Activated CD4-positive, alpha-beta T cell treated with anti-CD3 and anti-CD28 coated beads for 36 hours (primary cell): ENCODE measurements at regions of chr2 and their contacts with region 1.

Region 1: GRCh38 chr2:132267105-132267497 is 105.3 kb upstream of the ANKRD30BL start:
- DNase-seq: no peak
- ATAC-seq: no peak
- H3K4me3 Mint-ChIP-seq: no peak overlapping the region
- H3K27ac Mint-ChIP-seq: no peak overlapping the region
- H3K4me1 Mint-ChIP-seq: no peaks in the 10 kb centered on the region
- H3K27me3 Mint-ChIP-seq: no peaks in the 10 kb centered on the region

Region 2: GRCh38 chr2:133171393-133172004 is 904.4 kb after region 1 on chr2:
- CTCF ChIA-PET with region 1: no interaction called
- POLR2A ChIA-PET with region 1: no interaction called
- intact Hi-C with region 1: loop called in 1 of 2 experiments (anchors 1 kb)
- DNase-seq: no peak
- ATAC-seq: no peak
- H3K4me3 Mint-ChIP-seq: no peak overlapping the region
- H3K27ac Mint-ChIP-seq: no peak overlapping the region
- H3K4me1 Mint-ChIP-seq: no peaks in the 10 kb centered on the region
- H3K27me3 Mint-ChIP-seq: peaks cover 6% of the 10 kb centered on the region

Region 3: DNA sequence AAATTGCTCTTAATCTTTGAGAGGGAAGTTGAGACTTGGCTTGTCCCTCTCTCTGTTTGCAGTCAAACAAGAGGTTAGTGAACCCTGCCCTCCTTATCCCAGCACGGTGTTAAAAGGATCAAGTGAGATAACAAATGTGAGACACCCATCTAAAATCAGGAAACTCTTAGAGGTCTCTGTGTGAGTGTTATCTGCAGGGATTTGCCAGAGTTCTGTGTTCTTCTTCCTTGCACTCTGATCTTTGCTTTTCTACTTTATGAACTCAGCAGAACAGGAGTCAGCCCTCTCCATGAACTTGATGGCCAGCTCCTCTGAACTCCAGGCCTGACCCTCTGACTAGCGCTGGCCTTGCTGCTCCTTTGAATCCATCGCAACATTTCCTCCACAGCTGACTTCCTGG is 1177.4 kb after region 1 on chr2:
- CTCF ChIA-PET with region 1: no interaction called
- POLR2A ChIA-PET with region 1: no interaction called
- intact Hi-C with region 1: no loop called
- DNase-seq: no peak
- ATAC-seq: no peak
- H3K4me3 Mint-ChIP-seq: no peak overlapping the region
- H3K27ac Mint-ChIP-seq: no peak overlapping the region
- H3K4me1 Mint-ChIP-seq: no peaks in the 10 kb centered on the region
- H3K27me3 Mint-ChIP-seq: no peaks in the 10 kb centered on the region

Region 4: DNA sequence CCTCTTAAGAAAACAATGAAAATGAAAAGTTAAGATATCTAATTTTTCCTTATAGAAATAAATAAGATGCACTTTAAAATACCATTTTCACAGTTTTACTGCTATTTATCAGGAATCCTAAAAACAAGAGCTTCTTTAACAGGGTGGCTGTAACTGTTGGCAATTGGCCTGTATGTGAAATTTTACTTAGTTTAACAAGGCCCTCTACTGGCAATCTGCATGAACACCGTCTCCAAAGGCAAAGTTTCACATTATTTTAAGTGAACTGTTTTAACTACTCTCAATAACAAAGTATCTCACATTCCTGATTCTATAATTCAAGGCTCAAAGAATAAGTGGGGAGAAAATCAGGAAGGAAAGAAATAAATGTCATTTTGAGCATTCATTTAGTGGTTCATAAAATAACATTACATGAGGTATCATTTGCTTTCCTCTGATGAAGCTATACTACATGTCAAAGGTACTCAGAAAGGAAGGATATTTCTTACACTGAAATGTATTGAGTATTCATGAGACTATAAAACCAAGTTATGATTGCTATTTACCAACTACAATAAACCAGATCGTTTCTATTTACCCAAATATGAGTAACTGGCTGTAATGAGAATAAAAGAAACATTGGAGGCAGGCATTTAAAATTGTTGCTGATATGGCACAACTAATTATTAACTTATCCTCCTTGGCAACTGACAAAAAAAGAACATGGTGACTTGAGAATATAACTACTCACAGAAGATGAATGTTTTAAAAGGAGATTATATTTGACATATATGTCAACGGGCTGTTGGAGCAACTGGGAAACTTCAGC is 1294.1 kb after region 1 on chr2:
- CTCF ChIA-PET with region 1: no interaction called
- POLR2A ChIA-PET with region 1: no interaction called
- intact Hi-C with region 1: loop called in 1 of 2 experiments (anchors 10 kb)
- DNase-seq: no peak
- ATAC-seq: no peak
- H3K4me3 Mint-ChIP-seq: no peak overlapping the region
- H3K27ac Mint-ChIP-seq: no peak overlapping the region
- H3K4me1 Mint-ChIP-seq: no peaks in the 10 kb centered on the region
- H3K27me3 Mint-ChIP-seq: peaks cover 5% of the 10 kb centered on the region